PC-3 (cell line): ENCODE measurements at regions of chr3 and their contacts with region 1.

Region 1: DNA sequence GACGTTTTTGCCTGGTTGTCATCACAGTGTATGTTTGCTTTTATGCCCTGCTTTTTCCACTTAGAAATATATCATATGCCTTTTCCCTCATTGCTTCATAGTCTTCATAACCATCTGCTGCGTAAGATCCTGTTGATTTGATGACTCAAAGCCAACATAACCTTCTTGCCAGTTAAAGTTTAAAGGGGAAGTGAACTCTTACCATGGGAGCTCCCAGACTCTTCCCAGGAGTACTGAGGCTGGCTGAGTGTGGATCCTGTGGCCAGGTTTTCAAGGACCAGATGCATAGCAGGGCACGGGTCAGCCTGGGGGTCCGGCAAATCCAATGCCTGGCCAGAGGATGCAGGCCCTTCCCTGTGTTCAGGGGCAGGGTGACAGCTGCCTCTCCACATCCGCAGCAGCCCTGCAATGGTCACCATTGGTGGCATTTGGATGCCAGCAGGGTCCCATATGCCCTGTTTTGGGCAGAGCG is 42.0 kb upstream of the SACM1L start:
- DNase-seq: peak; percentile 95
- ATAC-seq: peak; percentile 51
- H3K4me3 ChIP-seq: peak overlapping the region; percentile 11; the same call in 1 of the 2 replicates
- H3K27ac ChIP-seq: peak overlapping the region; percentile 97
- H3K4me1 ChIP-seq: peaks cover 56% of the 10 kb centered on the region
- H3K27me3 ChIP-seq: no peaks in the 10 kb centered on the region
- CTCF ChIP-seq: no peak

Region 2: DNA sequence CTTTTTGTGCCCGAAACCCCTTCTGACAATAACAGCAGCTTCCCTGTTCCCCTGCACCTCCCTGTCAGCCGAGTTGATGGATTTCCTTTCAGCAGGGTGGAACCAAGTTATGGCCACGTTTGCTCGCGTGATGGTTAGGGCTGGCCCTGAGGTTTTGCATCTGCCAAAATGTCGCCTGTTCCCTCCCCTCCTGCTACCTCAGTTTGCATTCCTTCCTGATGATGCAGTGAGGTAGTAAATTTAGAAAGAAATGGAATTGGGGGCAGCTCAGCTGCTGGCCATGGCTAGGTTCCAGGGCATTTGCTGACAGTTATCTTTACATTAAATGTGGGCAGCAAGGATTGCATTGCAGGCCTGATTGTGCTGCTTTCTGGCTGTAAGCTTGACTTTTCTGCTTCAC is 39.4 kb before region 1 on chr3:
- CTCF ChIA-PET with region 1: interaction called, 3 read pairs
- POLR2A ChIA-PET with region 1: no interaction called
- intact Hi-C with region 1: loop called (anchors 2 kb)
- DNase-seq: peak; percentile 91
- ATAC-seq: peak; percentile 76
- H3K4me3 ChIP-seq: peak overlapping the region; percentile 17; the same call in 1 of the 2 replicates
- H3K27ac ChIP-seq: peak overlapping the region; percentile 76
- H3K4me1 ChIP-seq: peaks cover 55% of the 10 kb centered on the region
- H3K27me3 ChIP-seq: no peaks in the 10 kb centered on the region
- CTCF ChIP-seq: no peak